ENCODE measurements at regions of chr9 and their contacts with region 1.

Region 1: DNA sequence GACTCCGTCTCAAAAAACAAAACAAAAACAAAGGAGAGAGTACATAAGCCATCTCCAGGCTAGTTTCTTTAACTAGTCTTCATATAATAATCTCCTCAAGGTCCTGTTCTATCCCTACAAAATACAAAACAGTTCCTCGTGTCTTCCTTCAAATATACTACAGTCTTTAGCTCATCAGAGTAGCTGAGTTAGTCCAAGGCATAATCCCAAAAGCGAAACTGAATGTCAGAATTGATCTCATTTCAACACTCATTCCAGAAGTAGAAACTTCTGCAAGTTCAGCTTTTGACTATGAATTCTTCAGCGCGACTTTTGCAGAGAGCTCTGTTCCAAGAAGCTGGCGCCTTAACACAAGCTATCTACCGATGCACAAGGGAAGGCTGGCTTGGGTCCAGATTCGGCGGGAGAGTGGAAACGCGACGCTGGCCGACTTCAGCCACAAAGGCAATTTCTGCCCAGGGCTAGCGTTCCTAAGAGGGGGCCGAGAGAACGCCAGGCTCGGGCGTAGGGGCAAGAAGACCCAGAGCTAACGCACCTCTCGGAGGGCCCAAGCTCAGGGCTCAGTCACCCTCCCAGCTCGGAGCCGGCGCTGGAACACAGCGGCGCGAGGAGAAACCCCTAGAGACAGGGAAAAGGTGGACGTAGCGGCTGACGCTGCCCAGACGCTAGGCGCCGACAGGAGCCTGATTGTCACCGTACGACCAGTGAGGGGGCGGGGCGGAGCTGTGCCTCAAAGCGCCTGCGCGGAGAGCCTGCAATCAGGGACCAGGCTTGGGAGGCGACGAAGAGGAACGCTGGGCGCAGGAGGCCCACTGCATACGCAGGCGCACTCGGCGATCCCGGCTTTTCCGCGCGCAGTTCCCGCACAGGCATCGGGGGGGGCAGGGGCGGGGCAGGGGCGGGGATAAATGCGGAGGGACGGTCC is 469 bp upstream of the HSDL2 start:
- DNase-seq: peak; percentile 99
- H3K4me3 ChIP-seq: peak overlapping the region; percentile 88
- H3K27ac ChIP-seq: peak overlapping the region; percentile 96
- H3K4me1 ChIP-seq: peaks cover 5% of the 10 kb centered on the region
- H3K27me3 ChIP-seq: no peaks in the 10 kb centered on the region
- CTCF ChIP-seq: no peak

Region 2: DNA sequence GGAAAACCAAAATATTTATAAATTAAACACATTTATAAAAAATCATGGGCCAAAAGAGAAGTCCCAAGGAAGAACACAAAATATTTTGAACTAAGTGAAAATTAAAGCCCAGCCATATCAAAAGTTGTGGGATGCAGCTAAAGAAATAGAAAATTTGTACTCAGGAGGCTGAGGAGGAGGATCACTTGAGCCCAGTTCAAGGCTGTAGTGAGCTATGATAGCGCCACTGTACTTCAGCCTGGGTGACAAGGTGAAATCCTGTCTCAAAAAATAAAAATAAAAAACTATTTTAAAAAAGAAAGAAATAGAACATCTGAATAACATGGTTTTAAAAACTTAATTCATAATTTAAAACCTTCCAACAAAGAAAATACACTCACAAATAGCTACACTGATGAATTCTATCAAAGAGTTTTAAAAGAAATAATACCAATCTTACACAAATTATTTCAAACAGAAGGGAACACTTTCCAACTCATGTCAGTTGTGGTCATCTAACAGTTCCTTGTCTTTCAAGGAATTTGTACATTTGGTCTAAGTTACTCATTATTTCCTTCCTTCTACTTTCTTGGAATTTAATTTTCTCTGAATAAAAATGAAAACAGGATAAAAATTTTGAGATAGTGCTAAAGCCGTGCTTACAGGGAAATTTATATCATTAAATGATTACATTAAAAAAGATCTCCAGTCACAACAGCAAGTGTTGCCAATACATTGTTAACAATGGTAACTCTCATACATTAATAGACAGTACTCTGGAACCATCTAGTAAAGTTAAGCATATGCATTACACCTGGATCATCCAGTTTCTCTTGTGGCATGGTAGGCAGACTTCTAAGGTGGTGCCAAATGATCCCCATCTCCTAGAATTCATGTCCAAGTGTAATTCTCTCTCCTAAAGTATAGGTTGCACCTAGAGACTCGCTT is 63.8 kb before region 1 on chr9:
- CTCF ChIA-PET with region 1: no interaction called
- POLR2A ChIA-PET with region 1: no interaction called
- intact Hi-C with region 1: no loop called
- DNase-seq: no peak
- H3K4me3 ChIP-seq: no peak overlapping the region
- H3K27ac ChIP-seq: no peak overlapping the region
- H3K4me1 ChIP-seq: no peaks in the 10 kb centered on the region
- H3K27me3 ChIP-seq: no peaks in the 10 kb centered on the region
- CTCF ChIP-seq: no peak

Region 3: GRCh38 chr9:112717661-112718341 is 338.4 kb after region 1 on chr9 and contains the start of gene INIP:
- CTCF ChIA-PET with region 1: interaction called, 6 read pairs
- POLR2A ChIA-PET with region 1: no interaction called
- intact Hi-C with region 1: loop called (anchors 10 kb)
- DNase-seq: peak; percentile 99
- H3K4me3 ChIP-seq: peak within 1 kb of the TSS; percentile 85
- H3K27ac ChIP-seq: peak within 1 kb of the TSS; percentile 86
- H3K4me1 ChIP-seq: peaks cover 14% of the 10 kb centered on the region
- H3K27me3 ChIP-seq: no peaks in the 10 kb centered on the region
- CTCF ChIP-seq: no peak
- total RNA-seq, gene INIP: 26.6 and 28.9 TPM in 2 replicates

Measured in A673 (cell line).